Common myeloid progenitor, CD34-positive (primary cell): ENCODE measurements at regions of chr10 and their contacts with region 1.

Region 1: DNA sequence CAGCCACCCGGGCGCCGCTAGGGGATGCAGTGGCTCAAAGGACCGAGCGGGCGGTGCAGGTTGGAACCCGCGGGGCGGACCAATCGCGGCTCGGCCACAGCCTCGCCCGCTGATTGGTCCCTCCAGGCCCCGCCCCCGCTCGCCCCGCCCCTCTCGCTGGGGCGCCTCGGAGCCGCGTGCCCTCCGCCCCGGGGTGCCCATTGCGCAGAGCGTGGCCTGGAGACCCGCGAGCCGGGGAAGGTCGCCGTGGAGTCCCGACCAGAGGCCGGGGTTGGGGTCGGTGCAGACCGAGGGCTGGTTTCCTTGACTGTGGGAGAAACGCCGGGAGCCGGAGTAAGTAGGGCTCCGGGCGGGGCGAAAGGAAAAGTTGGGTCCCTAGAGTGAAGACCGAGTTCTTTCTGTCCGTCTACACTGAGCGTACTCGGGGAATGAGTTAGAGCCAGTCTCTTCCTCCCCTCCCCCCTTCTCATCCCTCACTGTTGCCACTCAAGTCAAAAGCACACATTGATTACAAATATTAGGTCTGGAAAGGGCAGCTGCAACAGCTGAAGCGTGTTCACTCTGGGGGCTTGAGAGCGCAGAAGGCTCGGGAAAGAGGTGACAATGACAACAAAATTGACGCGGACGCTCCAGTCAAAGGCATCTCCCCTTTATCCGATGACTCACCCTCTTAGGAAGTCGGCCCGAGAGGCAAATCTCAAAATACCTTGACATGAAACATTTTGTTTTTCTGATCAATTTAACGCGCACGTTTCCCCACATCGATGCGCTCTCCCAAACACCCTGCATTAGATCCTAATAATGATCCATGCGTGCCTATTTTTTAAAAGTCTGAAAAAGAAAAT is 820 bp upstream of the GATA3 start:
- DNase-seq: peak; percentile 84 to 88 (median 87)
- H3K4me3 ChIP-seq: peak overlapping the region in 6 of 7 experiments; percentile 42 to 85 (median 62)
- H3K27ac ChIP-seq: no peak overlapping the region
- H3K4me1 ChIP-seq: peaks cover 12 to 90% (median 73%) of the 10 kb centered on the region in 4 experiments
- H3K27me3 ChIP-seq: peaks cover 0 to 66% (median 22%) of the 10 kb centered on the region in 5 experiments

Region 2: DNA sequence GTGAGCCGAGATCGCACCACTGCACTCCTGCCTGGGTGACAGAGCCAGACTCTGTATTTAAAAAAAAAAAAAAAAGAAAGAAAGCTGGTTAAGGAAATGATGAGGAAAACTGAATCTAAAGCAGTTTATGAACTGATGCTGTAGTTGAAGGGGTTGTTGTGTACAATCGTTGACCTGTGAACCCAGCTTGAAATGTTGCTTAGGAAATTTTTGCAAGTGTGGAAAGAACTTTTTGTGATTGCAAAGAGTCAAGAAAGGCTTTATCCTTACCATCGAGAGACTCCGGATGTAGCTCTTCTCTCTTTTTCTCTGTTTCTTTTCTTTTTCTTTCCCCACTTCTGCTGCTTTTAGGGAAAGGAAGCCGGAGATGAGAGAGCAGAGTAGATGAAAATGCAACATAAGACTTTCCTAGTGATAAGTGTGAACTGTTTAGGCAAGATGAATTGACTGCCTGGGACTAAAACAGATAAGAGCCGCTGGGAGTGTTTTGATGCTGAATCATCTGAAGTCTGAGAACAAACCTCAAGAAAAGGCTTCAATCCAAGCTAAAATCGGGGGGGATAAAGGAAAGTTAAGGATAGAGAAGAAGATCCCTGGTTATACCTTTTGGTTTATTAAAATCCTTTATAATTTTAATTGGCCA is 166.4 kb before region 1 on chr10:
- CTCF ChIA-PET with region 1: no interaction called
- POLR2A ChIA-PET with region 1: no interaction called
- DNase-seq: no peak
- H3K4me3 ChIP-seq: no peak overlapping the region
- H3K27ac ChIP-seq: no peak overlapping the region
- H3K4me1 ChIP-seq: peaks cover 0 to 2% (median 0%) of the 10 kb centered on the region in 4 experiments
- H3K27me3 ChIP-seq: no peaks in the 10 kb centered on the region

Region 3: DNA sequence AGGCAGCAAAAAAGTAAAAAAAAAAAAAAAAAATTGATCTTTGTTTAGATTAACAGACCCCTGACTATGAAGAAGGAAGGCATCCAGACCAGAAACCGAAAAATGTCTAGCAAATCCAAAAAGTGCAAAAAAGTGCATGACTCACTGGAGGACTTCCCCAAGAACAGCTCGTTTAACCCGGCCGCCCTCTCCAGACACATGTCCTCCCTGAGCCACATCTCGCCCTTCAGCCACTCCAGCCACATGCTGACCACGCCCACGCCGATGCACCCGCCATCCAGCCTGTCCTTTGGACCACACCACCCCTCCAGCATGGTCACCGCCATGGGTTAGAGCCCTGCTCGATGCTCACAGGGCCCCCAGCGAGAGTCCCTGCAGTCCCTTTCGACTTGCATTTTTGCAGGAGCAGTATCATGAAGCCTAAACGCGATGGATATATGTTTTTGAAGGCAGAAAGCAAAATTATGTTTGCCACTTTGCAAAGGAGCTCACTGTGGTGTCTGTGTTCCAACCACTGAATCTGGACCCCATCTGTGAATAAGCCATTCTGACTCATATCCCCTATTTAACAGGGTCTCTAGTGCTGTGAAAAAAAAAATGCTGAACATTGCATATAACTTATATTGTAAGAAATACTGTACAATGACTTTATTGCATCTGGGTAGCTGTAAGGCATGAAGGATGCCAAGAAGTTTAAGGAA is 20.2 kb after region 1 on chr10:
- CTCF ChIA-PET with region 1: no interaction called
- POLR2A ChIA-PET with region 1: no interaction called
- DNase-seq: no peak
- H3K4me3 ChIP-seq: no peak overlapping the region
- H3K27ac ChIP-seq: no peak overlapping the region
- H3K4me1 ChIP-seq: peaks cover 0 to 9% (median 0%) of the 10 kb centered on the region in 4 experiments
- H3K27me3 ChIP-seq: no peaks in the 10 kb centered on the region

Region 4: DNA sequence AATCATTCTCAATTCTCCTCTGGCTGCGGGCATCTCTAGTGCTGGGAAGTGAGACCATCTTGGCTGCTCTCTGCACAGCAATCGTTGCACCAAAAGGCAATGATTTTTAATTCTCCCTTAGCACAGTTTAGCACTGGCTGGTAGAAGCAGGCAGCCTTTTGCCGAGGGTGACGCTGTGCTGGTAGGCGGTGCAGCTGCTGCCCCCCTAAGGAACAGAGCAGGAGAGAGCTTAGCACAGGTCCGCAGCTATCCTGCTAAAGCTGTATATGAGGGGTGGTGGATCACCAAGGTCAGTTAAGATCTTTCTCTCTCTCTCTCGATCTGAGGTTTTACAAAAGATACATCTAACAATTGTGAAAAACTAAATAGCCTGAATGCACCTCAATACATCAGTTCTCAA is 391.0 kb after region 1 on chr10:
- CTCF ChIA-PET with region 1: interaction called, 10 read pairs
- POLR2A ChIA-PET with region 1: no interaction called
- DNase-seq: peak; percentile 45 to 57 (median 55)
- H3K4me3 ChIP-seq: no peak overlapping the region
- H3K27ac ChIP-seq: no peak overlapping the region
- H3K4me1 ChIP-seq: no peaks in the 10 kb centered on the region
- H3K27me3 ChIP-seq: peaks cover 0 to 7% (median 0%) of the 10 kb centered on the region in 5 experiments